ENCODE measurements at regions of chr1 and their contacts with region 1.

Region 1: DNA sequence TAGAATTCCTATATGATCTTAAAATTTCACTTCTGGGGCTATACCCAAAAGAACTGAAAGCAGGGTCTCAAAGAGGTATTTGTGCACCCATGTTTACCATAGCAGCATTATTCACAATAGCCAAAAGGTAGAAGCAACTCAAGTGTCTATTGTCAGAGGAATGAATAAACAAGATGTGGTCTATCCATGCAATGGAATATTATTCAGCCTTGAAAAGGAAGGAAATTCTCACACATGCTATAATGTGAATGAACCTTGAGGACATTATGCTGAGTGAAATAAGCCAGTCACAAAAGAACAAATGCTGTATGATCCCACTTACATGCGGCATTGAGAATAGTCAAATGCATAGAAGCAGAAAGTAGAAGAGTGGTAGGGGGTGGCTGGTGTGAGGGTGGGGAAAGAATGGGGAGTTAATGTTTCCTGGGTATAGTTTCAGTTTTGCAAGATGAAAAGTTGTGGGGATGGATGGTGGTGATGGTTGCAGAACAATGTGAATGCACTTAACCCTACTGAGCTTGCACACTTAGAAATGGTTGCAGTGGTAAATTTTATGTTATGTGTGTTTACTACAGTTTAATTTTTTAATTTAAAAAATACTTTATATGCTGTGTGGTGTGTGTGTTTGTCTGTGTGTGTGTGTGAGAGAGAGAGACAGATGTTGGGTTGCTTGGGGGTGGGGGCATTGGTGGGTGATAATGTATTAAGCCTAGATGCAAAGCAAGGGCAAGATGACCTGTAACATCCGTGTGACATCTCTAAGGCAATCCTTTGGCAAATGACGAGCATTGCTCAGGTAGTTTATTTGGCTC is 122.3 kb downstream of the TOMM20 start:
- DNase-seq: no peak
- ATAC-seq: no peak
- H3K4me3 ChIP-seq: no peak overlapping the region
- H3K27ac ChIP-seq: no peak overlapping the region
- H3K4me1 ChIP-seq: no peaks in the 10 kb centered on the region
- H3K27me3 ChIP-seq: no peaks in the 10 kb centered on the region
- CTCF ChIP-seq: no peak

Region 2: GRCh38 chr1:234955107-234955731 is 51.1 kb before region 1 on chr1:
- intact Hi-C with region 1: no loop called
- DNase-seq: peak in 2 of 6 donors; percentile 49 to 72
- ATAC-seq: peak in 3 of 4 donors; percentile 26 to 55 (median 49)
- H3K4me3 ChIP-seq: no peak overlapping the region
- H3K27ac ChIP-seq: peak overlapping the region in 3 of 4 donors; percentile 31 to 87 (median 80)
- H3K4me1 ChIP-seq: peaks cover 46 to 58% (median 54%) of the 10 kb centered on the region in 3 donors
- H3K27me3 ChIP-seq: no peaks in the 10 kb centered on the region
- CTCF ChIP-seq: no peak

Region 3: DNA sequence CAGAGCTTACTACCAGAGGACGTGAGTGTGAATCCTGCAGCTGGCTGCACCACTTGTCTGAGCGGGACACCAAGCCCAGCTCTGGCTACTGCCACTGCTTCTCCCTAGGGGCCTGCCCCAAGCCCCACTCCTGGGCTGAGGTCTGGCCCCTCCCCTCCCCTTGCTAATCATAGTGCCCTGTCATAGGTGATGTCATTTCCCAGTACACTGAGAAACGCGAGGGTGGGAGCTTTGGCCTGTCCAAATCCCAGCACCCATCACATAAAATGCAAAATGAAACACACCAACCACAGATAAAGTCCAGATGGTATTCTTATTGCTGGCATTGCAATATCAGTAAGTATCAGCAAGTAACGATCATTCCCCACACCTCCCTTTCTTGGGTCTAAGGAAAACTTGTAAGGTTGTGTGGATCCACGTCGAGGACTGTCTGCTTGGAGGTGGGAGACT is 44.6 kb after region 1 on chr1:
- intact Hi-C with region 1: loop called in 1 of 3 experiments (anchors 10 kb)
- DNase-seq: no peak
- ATAC-seq: peak in 3 of 4 donors; percentile 34 to 49 (median 46)
- H3K4me3 ChIP-seq: no peak overlapping the region
- H3K27ac ChIP-seq: peak overlapping the region in 2 of 4 donors; percentile 10 to 23
- H3K4me1 ChIP-seq: no peaks in the 10 kb centered on the region
- H3K27me3 ChIP-seq: no peaks in the 10 kb centered on the region
- CTCF ChIP-seq: no peak